ENCODE measurements at regions of chr6 and their contacts with region 1.

Region 1: GRCh38 chr6:100116411-100117194 is 122.6 kb upstream of the MCHR2 start:
- DNase-seq: peak; percentile 38 to 56
- H3K4me3 ChIP-seq: no peak overlapping the region
- H3K27ac ChIP-seq: no peak overlapping the region
- H3K4me1 ChIP-seq: no peaks in the 10 kb centered on the region
- H3K27me3 ChIP-seq: peaks cover 0 to 1% (median 0%) of the 10 kb centered on the region in 4 experiments; a peak in 1 of 7 replicates
- CTCF ChIP-seq: peak in 2 of 3 experiments; percentile 70 to 95; a peak in 3 of 4 replicates
- EP300 ChIP-seq: no peak
- POLR2A ChIP-seq: no peak
- RAD21 ChIP-seq: peak; percentile 94

Region 2: DNA sequence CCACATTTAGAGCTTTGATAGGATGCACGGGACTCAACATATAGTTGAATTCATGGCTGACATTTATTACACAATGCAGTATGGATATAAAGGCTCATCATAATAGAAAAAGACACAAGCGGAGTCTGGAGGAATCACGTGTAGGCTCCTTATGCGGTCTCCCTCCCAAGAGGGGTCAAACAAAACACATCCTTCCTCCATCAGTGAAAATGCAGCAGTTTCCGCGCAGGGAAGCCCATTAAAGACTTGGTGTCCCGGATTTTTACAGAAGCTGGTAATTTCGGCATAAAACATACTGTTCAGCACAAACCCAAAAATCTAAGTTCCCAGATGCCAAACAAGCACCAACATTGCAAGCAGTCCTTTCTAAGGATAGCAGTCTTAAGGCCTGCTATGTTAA is 602.5 kb before region 1 on chr6:
- CTCF ChIA-PET with region 1: no interaction called
- POLR2A ChIA-PET with region 1: no interaction called
- DNase-seq: no peak
- H3K4me3 ChIP-seq: peak overlapping the region; percentile 78 to 92 (median 82)
- H3K27ac ChIP-seq: no peak overlapping the region
- H3K4me1 ChIP-seq: peaks cover 2 to 5% (median 4%) of the 10 kb centered on the region in 4 experiments; a peak in 4 of 7 replicates
- H3K27me3 ChIP-seq: no peaks in the 10 kb centered on the region
- CTCF ChIP-seq: no peak
- EP300 ChIP-seq: no peak
- POLR2A ChIP-seq: no peak; a peak in 1 of 3 replicates
- RAD21 ChIP-seq: no peak

Region 3: DNA sequence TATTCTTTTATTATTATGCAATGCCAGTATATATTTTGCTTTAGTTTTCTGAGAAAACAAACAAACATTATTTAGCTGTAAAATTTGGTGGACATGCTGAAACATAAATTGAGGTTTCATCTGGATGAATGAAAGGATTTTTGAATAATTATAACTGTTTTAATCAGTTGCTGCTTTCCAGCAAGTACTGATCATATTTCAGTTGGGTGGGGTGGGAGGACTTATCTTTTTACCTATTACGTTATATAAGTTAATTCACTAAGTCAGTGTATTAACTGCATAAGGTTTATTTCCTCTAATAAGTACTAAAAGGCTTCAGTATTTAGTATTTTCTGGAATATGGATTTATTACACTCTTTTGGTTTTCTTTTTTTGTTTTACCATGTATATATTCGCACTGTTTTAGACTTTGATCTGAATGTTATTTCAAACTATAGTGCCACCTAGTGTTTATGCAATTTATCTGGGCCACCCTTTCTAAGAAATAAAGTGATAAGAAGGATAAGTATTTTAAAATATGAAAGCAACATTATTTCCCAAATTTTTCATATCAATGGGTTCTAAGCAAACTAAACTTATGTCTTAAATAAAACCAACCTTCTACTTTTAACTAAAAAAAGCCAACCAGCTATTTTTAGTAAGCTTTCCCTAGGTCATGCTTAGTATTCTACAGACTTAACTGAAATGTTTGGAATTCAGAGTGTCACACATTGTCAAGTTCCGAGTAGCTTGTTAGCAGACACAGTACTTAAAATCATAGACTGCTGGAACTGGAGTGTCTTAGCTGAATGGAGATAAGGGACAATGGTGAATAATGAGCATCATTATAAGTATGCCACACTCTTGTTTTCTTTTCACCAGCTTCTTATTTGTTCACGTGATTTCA is 17.2 kb before region 1 on chr6:
- CTCF ChIA-PET with region 1: interaction called, 22 read pairs
- POLR2A ChIA-PET with region 1: no interaction called
- DNase-seq: no peak
- H3K4me3 ChIP-seq: no peak overlapping the region
- H3K27ac ChIP-seq: no peak overlapping the region
- H3K4me1 ChIP-seq: no peaks in the 10 kb centered on the region
- H3K27me3 ChIP-seq: no peaks in the 10 kb centered on the region
- CTCF ChIP-seq: peak in 2 of 3 experiments; percentile 18 to 29; a peak in 2 of 4 replicates
- EP300 ChIP-seq: no peak
- POLR2A ChIP-seq: no peak
- RAD21 ChIP-seq: peak in 1 of 2 experiments; percentile 44; a peak in 3 of 4 replicates

Region 4: DNA sequence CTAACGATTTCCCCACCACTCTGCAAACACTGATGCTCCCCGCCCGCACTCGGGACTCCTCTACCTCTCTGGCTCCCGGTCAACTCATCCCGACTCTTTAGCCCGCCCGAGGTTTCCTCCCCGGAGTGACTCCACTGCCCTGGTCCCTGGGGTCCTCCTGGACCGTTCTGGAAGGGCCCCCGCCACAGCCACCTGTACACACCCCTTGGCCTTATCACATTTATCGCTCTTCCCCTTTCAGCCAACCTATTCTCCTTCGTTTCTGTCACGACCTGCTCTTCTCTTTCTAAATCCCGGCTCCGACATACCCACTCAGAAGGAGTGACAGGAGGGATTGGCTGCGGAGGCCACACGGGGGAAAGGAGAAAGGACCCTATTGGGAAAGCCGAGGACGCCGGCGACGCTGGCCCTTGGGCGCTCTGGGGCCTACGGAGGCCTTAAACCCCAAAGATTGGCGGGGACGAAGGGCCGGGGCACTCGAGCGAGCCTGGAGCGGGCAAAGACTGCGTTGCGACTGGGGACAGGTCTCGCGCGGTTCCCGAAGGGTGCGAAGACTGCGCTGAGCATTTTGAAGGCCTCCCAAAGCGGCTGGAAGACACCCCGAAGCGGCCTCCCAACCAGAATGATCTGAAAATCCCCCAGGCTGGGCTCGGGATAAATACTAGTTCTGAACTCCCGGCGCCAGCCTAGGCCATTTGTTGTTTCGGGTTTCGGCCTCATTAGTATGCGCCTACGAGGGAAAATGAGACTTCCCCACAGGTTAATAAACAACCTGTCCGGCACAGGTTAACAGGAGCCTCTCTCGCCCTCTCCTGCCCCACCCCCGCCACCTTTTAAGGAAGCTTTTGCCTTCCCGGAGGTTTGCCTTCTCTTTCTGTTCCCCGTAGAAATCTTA is 338.9 kb after region 1 on chr6:
- CTCF ChIA-PET with region 1: interaction called, 20 read pairs
- POLR2A ChIA-PET with region 1: no interaction called
- DNase-seq: peak in 1 of 2 experiments; percentile 69
- H3K4me3 ChIP-seq: peak overlapping the region; percentile 17 to 52 (median 28); a peak in 7 of 8 replicates
- H3K27ac ChIP-seq: no peak overlapping the region
- H3K4me1 ChIP-seq: peaks cover 9 to 38% (median 27%) of the 10 kb centered on the region in 4 experiments
- H3K27me3 ChIP-seq: peaks cover 95 to 100% (median 98%) of the 10 kb centered on the region in 4 experiments
- CTCF ChIP-seq: no peak
- EP300 ChIP-seq: no peak
- POLR2A ChIP-seq: no peak
- RAD21 ChIP-seq: no peak

Region 5: DNA sequence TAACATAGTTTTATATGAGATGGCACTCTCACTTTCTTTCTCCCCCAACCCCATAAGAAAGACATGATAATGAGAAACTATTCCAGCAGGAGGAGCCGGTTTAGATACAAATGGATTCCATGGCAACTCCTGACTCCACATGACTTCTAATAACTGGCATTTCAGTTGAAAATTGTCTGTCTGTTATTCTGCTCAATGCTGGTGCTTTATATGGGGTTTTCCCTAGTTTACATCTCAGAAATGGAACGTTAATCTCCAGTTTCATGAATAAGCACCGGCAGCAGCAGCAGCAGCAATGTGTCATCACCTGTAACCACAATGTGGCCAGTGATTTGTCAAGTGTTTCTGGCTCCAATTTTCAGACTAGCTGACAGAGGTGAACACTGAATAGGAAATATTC is 356.1 kb after region 1 on chr6:
- CTCF ChIA-PET with region 1: interaction called, 17 read pairs
- POLR2A ChIA-PET with region 1: no interaction called
- DNase-seq: no peak
- H3K4me3 ChIP-seq: no peak overlapping the region
- H3K27ac ChIP-seq: no peak overlapping the region
- H3K4me1 ChIP-seq: peaks cover 0 to 6% (median 4%) of the 10 kb centered on the region in 4 experiments; a peak in 5 of 7 replicates
- H3K27me3 ChIP-seq: peaks cover 25 to 44% (median 33%) of the 10 kb centered on the region in 4 experiments
- CTCF ChIP-seq: no peak
- EP300 ChIP-seq: no peak
- POLR2A ChIP-seq: no peak
- RAD21 ChIP-seq: no peak; a peak in 1 of 4 replicates

Region 6: DNA sequence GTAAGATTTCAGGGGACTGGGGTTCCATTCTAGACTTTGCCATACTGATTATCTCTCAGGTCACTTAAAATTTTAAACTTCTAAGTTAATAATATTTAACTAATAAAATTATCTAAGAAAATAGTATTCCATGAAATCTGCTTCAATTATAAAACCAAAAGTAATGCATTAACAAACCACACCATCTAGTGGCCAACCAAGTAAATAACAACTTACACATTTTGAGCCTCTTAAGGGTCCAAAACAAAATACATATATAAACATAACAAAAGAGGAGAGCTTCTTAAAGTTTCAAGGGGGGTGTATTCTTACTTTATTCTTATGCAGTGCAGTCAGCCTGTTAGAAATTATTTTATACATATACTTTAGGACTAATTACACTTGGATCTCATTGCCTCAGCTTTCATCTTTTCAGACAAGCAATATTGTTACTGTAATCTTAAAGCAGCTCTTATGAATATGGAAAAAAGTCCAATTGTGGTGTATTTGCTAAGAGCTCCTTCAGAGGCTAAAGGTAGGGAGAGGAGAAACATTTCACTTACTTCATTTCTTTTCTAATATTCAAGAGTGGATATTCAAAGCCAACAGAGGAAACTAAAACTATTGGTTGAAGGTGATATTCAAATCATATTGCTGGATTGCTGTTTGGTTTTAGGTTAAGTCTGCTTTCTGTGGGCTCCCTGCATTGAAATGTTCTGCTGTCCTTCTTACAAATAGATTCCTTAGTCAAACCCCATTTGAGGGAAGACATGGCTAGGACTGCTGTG is 547.9 kb after region 1 on chr6:
- CTCF ChIA-PET with region 1: interaction called, 10 read pairs
- POLR2A ChIA-PET with region 1: no interaction called
- DNase-seq: no peak
- H3K4me3 ChIP-seq: no peak overlapping the region
- H3K27ac ChIP-seq: no peak overlapping the region
- H3K4me1 ChIP-seq: peaks cover 0 to 3% (median 0%) of the 10 kb centered on the region in 4 experiments; a peak in 4 of 7 replicates
- H3K27me3 ChIP-seq: no peaks in the 10 kb centered on the region
- CTCF ChIP-seq: peak in 2 of 3 experiments; percentile 11 to 50; a peak in 2 of 4 replicates
- EP300 ChIP-seq: no peak
- POLR2A ChIP-seq: no peak
- RAD21 ChIP-seq: peak in 1 of 2 experiments; percentile 59; a peak in 3 of 4 replicates